Right ventricle myocardium superior (tissue), 1 donor: ENCODE measurements at regions of chr4 and their contacts with region 1.

Region 1: DNA sequence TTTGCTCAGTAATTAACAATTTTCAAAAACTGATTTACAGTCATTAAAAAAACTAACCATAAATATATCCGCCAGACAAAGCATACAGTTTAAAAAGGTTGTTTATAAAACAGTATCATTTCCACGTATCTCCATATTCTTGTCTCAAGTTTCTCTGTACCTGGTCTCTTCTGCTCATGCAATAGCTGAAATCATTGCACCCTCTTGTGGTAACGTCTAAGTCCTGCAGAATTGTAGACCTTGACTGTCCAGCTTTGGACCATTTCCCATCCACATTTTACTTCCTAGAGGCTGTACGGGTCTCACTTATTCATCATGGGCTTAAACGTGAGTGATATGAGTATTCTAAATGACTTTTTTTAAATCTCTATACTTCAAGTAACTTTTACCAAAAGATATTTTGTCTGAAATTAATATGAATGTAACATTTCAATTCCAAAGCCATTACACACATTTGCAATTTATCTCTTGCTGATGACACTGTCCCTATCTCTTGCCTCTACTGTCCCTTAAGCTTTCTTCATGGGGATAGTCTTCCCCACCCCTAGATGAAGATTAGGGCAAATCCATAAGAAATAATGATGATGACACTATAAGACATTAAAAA is 118.5 kb downstream of the BTC start:
- DNase-seq: no peak
- ATAC-seq: peak; percentile 68

Region 2: GRCh38 chr4:74320559-74321118 is 355.1 kb before region 1 on chr4:
- intact Hi-C with region 1: loop called (anchors 5 kb)
- DNase-seq: no peak
- ATAC-seq: peak; percentile 46

Region 3: DNA sequence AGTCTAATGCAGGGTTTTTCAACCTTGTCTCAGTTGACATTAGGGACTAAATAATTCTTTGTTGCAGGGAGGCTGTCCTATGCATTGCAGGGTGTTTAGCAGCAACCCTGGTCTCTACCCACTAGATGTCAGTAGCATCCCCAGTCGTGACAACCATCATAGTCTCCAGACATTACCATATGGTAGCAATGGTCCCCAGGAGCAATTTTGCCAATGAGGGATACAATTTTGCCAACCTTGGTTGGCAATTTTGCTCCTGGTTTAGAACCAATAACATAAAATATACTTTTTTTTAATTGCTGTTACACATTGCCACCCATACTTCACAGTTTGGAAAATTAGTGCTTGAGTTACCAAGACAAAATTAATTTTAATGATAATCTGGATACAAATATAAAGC is 304.9 kb before region 1 on chr4:
- intact Hi-C with region 1: loop called (anchors 10 kb)
- DNase-seq: no peak
- ATAC-seq: peak; percentile 86